ENCODE measurements at regions of chr19 and their contacts with region 1.

Region 1: GRCh38 chr19:48630296-48631063 is 6.7 kb downstream of the DBP start:
- DNase-seq: peak; percentile 72
- ATAC-seq: peak; percentile 11
- H3K4me3 Mint-ChIP-seq: peak overlapping the region; percentile 71
- H3K27ac Mint-ChIP-seq: peak overlapping the region; percentile 99
- H3K4me1 Mint-ChIP-seq: peaks cover 32% of the 10 kb centered on the region
- H3K27me3 Mint-ChIP-seq: no peaks in the 10 kb centered on the region
- CTCF ChIP-seq: no peak

Region 2: DNA sequence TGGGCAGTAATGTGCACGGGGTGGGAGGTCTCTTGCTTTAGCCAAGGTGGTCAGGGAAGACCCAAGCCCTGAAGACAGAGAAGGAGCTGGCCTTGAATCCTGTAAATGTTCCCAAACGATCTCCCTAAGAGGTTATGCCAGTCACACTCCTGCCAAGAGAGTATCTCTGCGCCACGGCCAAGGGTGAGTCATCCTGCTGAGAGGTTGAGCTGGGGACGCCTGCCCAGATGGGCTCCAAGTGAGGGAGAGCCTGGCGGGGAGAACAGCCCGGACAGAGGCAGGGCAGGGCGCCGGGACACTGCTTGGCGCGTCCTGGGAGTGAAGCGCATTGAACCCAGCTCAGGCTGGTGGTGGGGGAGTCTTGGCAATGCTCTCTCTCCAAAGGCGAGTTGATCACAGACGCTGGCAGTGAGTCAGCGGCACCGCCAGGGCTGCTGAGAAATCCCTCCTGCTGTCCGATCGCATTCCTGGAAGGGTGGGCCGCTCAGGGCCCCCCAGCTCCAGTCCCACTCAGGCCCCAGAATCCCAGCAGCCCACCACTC is 62.1 kb before region 1 on chr19:
- CTCF ChIA-PET with region 1: no interaction called
- POLR2A ChIA-PET with region 1: no interaction called
- DNase-seq: no peak
- ATAC-seq: peak; percentile 51
- H3K4me3 Mint-ChIP-seq: no peak overlapping the region; the same call in 1 of the 2 replicates
- H3K27ac Mint-ChIP-seq: no peak overlapping the region
- H3K4me1 Mint-ChIP-seq: peaks cover 15% of the 10 kb centered on the region
- H3K27me3 Mint-ChIP-seq: peaks cover 6% of the 10 kb centered on the region; the same call in 1 of the 2 replicates
- CTCF ChIP-seq: no peak

Region 3: GRCh38 chr19:48618916-48619691 is 11.4 kb before region 1 on chr19 and contains the starts of genes RPL18 and SPHK2:
- CTCF ChIA-PET with region 1: interaction called, 17 read pairs
- POLR2A ChIA-PET with region 1: interaction called, 23 read pairs
- DNase-seq: peak; percentile 96
- ATAC-seq: peak; percentile 65
- H3K4me3 Mint-ChIP-seq: peak within 1 kb of the TSS; percentile 99
- H3K27ac Mint-ChIP-seq: peak within 1 kb of the TSS; percentile 100
- H3K4me1 Mint-ChIP-seq: peaks cover 60% of the 10 kb centered on the region
- H3K27me3 Mint-ChIP-seq: no peaks in the 10 kb centered on the region; the same call in 1 of the 2 replicates
- CTCF ChIP-seq: no peak
- total RNA-seq, gene RPL18: 1,712 to 1,987 TPM (median 1,909 TPM) in 3 replicates
- total RNA-seq, gene SPHK2: 46.7 to 64.6 TPM (median 48.4 TPM) in 3 replicates

Measured in WTC11 (cell line).